Activated T-helper 1 cell treated with anti-CD3 and anti-CD28 coated beads, Interleukin-12 subunit alpha, Interleukin-12 subunit beta, Interleukin-2, Interleukin-4 antibody, amounts not matched to agents 30 ng/mL and 10 ng/mL and 1 ng/mL, durations not matched to agents 14 hours and 24 hours and 36 hours (primary cell): ENCODE measurements at regions of chr13 and their contacts with region 1.

Region 1: DNA sequence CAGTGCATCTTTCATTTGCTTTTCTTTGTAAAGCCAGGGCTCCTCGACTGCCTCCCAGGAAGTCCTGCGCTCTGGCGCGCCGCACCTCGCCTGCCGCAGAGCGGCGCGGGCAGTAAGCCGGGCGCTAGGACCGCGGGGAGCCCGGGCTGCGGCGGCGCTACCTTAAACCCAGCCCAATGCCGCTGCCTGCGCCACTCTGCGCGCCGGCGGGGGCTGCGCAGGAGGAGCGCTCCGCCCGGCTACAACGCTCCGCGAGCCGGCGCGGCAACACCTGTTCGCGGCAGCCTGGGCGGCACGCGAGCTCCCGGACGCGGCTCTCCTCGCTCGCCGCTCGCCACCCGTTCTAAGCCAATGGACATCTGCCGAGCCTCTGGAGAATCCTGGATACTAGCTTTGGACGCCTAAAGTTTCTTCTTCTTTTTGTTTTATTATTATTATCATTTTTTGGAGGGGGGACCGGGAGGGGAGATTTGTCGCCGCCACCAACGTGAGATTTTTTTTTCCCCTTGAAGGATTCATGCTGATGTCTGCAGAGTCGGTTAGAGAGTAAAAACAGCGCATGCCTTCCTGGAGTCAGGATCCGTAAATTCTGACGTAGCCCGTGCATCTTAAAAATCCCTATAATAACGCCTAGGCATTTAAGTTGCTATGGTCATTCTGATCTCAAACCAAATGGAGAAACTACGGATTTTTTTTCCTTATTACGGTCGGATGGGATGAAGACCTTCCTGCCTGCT is at the start of gene FGF9:
- DNase-seq: peak; percentile 77
- H3K4me3 Mint-ChIP-seq: peak within 1 kb of the TSS; percentile 82
- H3K27ac Mint-ChIP-seq: peak within 1 kb of the TSS; percentile 59
- H3K4me1 Mint-ChIP-seq: peaks cover 42% of the 10 kb centered on the region
- H3K27me3 Mint-ChIP-seq: peaks cover 62% of the 10 kb centered on the region
- total RNA-seq, gene FGF9: 0.23 and 0.47 TPM in 2 replicates

Region 2: DNA sequence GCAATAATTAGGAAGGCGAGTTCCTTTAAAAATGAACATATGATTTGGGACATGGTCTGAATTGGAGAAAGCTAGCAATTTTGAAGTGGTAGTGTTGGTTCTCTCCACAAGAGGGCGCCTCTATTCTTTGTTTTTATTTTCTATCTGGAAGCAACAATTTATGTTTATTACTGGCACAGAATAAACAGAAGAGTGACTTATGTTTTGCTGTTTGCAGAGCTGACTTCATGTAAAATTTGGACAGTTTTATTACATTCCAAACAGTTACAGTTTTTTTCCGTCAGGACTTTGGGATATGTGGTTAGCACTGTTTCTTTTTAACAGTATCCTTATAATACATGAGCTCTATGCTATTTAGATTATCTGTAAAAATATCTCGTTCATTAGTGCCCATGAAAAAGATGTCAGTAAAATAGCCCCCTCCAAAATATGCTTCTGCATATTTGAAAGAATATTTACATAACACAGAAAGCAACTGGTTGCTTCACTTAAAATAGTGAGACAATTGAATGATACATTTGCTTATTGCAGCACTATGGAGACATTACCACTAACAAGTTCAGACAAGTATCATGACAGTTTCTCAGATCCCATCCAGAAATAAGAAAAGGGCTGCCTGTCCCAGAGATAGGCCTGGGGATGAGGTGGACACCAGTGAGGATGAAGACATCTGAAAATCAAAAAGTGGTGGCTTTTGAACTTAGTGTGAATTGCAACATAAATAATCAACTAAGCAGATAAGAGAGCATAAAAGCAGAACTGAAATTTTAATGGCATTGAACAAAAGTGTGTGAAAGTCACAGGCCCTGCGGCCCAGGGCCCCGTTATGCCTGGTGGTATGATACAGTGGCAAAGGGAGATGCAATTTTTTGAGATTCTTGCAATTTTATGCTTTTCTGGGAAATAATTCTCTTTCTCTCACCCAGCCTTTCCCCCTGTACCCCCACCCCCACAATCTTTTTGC is 32.5 kb before region 1 on chr13:
- intact Hi-C with region 1: loop called (anchors 2 kb)
- DNase-seq: no peak
- H3K4me3 Mint-ChIP-seq: no peak overlapping the region
- H3K27ac Mint-ChIP-seq: no peak overlapping the region
- H3K4me1 Mint-ChIP-seq: no peaks in the 10 kb centered on the region
- H3K27me3 Mint-ChIP-seq: peaks cover 7% of the 10 kb centered on the region

Region 3: DNA sequence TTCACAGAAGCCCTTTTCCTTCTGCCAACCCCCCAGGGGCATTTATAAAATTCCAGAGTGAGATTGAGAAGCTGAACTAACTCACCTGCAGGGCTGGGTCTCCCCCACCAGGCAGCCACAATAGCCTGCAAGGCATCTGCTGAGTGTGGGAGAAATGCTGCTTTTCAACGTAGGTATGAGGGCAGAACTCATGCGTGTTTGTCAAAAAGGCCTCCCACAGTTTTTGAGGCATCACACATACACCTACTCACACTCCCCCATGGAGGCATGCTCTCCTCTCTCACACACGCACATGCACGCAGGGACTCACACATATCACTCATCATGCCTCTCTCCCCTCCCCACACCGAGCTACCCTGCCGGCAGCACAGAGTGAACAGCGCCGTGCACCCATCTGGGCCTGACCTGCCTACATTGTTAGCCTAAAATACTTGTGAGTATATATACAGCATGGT is 390.3 kb after region 1 on chr13:
- intact Hi-C with region 1: loop called (anchors 5 kb)
- DNase-seq: peak; percentile 28
- H3K4me3 Mint-ChIP-seq: peak overlapping the region; percentile 53
- H3K27ac Mint-ChIP-seq: peak overlapping the region; percentile 83
- H3K4me1 Mint-ChIP-seq: peaks cover 65% of the 10 kb centered on the region
- H3K27me3 Mint-ChIP-seq: no peaks in the 10 kb centered on the region

Region 4: GRCh38 chr13:22278336-22278929 is 607.4 kb after region 1 on chr13:
- intact Hi-C with region 1: loop called (anchors 1 kb)
- DNase-seq: peak; percentile 14
- H3K4me3 Mint-ChIP-seq: no peak overlapping the region
- H3K27ac Mint-ChIP-seq: no peak overlapping the region
- H3K4me1 Mint-ChIP-seq: peaks cover 4% of the 10 kb centered on the region
- H3K27me3 Mint-ChIP-seq: peaks cover 2% of the 10 kb centered on the region